Endothelial cell of umbilical vein (primary cell): ENCODE measurements at regions of chr18 and their contacts with region 1.

Region 1: DNA sequence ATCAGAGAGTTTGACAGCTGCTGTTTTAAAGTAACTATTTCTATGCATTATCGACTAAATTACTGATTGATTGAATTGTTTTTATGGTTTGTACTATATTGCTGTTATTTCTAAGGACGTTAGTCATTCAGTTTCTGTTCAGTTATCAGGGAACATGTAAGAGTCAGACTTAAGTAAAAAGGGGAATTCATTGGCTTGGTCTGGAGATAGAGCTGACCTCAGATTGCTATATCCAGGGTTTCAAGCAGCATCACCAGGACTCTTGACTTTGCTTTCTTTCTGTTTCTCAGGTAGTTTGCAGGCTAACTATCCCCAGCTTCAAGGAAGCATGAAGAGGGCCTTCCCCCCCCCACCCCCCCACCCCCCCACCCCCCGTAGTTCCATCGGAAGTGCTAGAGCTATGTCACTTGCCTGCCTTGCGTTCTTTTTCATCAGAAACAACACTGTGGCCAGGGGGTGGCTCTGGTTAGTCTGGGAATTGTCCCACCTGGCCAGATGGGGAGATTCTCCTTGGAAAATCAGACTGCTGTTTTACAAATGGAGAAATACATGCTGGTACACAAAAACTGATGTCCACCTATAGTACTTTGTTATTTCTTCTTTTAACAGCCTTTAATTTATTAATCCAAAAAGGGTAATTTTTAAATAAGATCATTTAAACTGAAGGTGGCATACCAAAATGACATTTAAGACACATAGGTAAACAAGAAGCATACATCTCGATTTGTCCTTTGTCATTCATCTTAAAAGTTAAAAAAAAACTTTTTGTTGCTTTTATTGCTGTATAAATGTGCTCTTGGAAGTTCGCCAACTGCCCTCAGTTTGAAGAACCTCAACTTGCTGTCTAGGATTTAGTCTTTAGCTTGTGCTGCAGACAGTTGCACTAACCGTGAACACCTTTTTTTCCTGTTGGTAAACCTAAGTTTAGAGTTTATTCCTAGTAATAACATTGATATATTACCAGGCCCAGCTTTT is 9.4 kb downstream of the SMAD4 start:
- DNase-seq: no peak
- H3K4me3 ChIP-seq: no peak overlapping the region
- H3K27ac ChIP-seq: no peak overlapping the region
- H3K4me1 ChIP-seq: no peaks in the 10 kb centered on the region
- H3K27me3 ChIP-seq: no peaks in the 10 kb centered on the region
- CTCF ChIP-seq: no peak
- POLR2A ChIP-seq: no peak

Region 2: DNA sequence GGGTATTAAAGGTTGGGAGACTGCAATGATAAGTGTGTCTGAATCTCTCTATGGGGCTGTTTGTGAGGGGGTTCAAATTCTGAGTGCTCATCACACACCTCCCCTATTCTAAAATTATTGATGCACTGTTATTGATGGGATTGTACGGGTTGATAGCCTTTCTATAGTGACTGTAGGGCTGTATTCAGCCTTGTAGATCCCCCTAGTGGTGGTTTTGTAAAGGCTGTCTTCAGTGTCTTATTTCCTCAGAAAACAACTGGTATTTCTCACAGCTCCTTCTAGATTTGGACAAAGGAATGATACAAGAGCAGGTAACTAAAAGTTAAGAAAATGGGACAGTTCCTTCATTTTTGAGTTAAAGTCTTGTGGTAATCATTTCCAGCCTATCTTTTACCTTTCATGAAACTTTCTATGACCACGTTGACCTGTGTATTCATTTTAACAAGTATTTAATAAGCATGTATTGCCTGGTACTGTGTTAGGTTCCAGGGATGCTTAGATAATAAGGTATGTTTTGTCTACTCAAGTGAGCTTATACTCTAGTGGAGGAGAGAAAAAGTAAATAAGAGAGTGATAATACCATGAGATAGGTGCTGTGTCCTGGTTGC is 11.8 kb after region 1 on chr18:
- CTCF ChIA-PET with region 1: interaction called, 21 read pairs
- POLR2A ChIA-PET with region 1: no interaction called
- dilution Hi-C with region 1: no loop called
- intact Hi-C with region 1: no loop called
- DNase-seq: peak; percentile 56
- H3K4me3 ChIP-seq: no peak overlapping the region
- H3K27ac ChIP-seq: no peak overlapping the region
- H3K4me1 ChIP-seq: no peaks in the 10 kb centered on the region
- H3K27me3 ChIP-seq: no peaks in the 10 kb centered on the region
- CTCF ChIP-seq: peak; percentile 64 to 71
- POLR2A ChIP-seq: no peak